Activated CD8-positive, alpha-beta T cell treated with anti-CD3 and anti-CD28 coated beads, Interleukin-2, amount 10 ng/mL, durations not matched to agents 7 days and 5 days (primary cell): ENCODE measurements at regions of chr3 and their contacts with region 1.

Region 1: DNA sequence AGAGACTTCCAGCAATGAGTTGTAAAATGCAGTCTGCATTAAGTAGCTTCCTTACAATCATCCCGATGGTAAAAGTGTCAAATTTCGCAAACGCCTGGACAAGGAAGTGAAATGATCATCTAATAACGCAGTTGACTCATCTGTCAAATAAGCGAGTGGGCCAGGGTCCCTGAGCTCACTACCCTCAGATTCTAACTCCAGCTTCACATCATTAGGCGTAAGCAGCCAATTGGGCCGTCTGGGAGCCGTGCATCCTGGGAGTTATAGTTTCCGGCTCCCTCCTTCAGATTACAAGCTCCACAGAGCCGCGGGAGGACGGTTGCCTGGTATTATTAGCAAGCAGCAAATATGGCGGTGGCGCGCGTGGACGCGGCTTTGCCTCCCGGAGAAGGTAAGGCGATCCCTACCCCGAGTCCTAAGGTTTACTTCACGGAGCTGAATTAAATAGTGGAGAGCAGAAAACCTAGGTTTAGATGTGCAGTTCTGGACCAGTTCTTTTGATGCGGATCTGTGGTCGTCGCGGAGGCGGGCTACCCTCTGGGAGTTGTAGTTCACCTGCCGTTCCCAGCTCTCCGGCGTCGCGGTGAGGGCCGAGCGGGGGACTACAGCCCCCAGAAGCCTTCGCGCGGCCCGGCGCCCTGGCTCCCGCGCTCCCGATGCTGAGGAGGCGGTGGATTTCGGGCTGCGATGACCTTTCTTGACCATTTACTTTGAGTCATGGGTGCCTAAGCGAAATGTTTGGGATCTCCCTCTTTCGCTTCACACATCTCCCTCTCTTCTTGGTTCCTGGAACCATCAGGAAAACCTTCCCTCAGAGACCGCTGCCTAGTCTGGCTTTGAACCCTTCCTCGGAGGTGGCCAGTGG is at the start of gene CEP97:
- DNase-seq: peak; percentile 93
- ATAC-seq: peak; percentile 97
- H3K4me3 Mint-ChIP-seq: peak within 1 kb of the TSS; percentile 93
- H3K27ac Mint-ChIP-seq: peak within 1 kb of the TSS; percentile 95
- H3K4me1 Mint-ChIP-seq: peaks cover 48% of the 10 kb centered on the region
- H3K27me3 Mint-ChIP-seq: no peaks in the 10 kb centered on the region
- total RNA-seq, gene CEP97: 23.3 to 26.2 TPM

Region 2: DNA sequence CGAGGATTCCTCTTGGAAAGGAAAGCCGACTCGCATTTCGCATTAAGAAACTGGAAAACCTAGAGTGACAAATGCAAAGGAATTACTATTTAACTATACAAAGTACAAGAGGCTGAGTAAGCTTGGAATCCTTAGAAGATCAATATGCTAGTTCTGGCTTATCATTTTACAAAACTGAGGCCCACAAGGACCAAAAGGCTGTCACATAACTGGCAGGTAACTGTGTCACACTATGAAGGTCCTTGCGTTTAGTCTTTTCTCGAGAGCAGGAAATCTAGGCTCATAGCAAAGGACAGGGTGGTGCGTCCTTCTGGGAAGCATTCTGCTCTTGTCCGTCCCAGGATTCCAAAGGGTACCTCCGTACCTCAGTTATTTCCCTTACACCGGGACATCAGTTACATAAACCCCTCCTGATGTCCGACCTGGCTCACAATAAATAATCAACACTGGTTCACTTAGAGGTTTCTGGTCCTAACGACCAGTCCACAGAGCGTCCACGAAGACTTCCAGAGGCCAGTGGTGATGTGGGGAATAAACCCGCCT is 38.6 kb before region 1 on chr3:
- CTCF ChIA-PET with region 1: interaction called, 4 read pairs
- POLR2A ChIA-PET with region 1: interaction called, 10 read pairs
- DNase-seq: no peak
- ATAC-seq: peak; percentile 9
- H3K4me3 Mint-ChIP-seq: peak overlapping the region; percentile 97
- H3K27ac Mint-ChIP-seq: peak overlapping the region; percentile 97
- H3K4me1 Mint-ChIP-seq: peaks cover 38% of the 10 kb centered on the region
- H3K27me3 Mint-ChIP-seq: no peaks in the 10 kb centered on the region

Region 3: GRCh38 chr3:101703169-101703568 is 21.4 kb before region 1 on chr3:
- CTCF ChIA-PET with region 1: interaction called, 10 read pairs
- POLR2A ChIA-PET with region 1: interaction called, 3 read pairs
- DNase-seq: no peak
- ATAC-seq: no peak
- H3K4me3 Mint-ChIP-seq: no peak overlapping the region
- H3K27ac Mint-ChIP-seq: no peak overlapping the region
- H3K4me1 Mint-ChIP-seq: no peaks in the 10 kb centered on the region
- H3K27me3 Mint-ChIP-seq: no peaks in the 10 kb centered on the region

Region 4: DNA sequence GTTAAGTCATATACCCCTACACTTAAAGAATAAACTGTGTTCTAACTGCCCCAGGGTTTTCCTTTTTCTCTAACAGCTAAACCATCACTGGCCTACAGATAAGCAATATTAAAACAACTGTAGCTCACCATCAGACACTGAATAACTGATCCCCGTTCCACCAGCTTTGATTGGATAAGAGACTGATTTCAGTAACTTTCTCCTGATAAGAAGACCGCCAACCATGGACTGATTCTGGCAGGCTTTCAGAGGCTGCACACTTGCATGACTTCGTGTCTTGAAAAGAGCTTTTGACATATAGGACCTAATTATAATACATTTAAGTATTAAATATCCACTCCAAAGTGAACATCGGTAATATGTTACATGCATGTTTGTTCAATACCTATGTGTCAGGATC is 15.4 kb before region 1 on chr3:
- CTCF ChIA-PET with region 1: interaction called, 11 read pairs
- POLR2A ChIA-PET with region 1: interaction called, 3 read pairs
- DNase-seq: no peak
- ATAC-seq: no peak
- H3K4me3 Mint-ChIP-seq: no peak overlapping the region
- H3K27ac Mint-ChIP-seq: no peak overlapping the region
- H3K4me1 Mint-ChIP-seq: no peaks in the 10 kb centered on the region
- H3K27me3 Mint-ChIP-seq: no peaks in the 10 kb centered on the region

Region 5: GRCh38 chr3:101779047-101779821 is 54.7 kb after region 1 on chr3 and contains the start of gene NXPE3:
- CTCF ChIA-PET with region 1: interaction called, 4 read pairs
- POLR2A ChIA-PET with region 1: interaction called, 14 read pairs
- DNase-seq: peak; percentile 95
- ATAC-seq: peak; percentile 94
- H3K4me3 Mint-ChIP-seq: peak within 1 kb of the TSS; percentile 81
- H3K27ac Mint-ChIP-seq: peak within 1 kb of the TSS; percentile 97
- H3K4me1 Mint-ChIP-seq: peaks cover 48% of the 10 kb centered on the region
- H3K27me3 Mint-ChIP-seq: no peaks in the 10 kb centered on the region
- total RNA-seq, gene NXPE3: 25.7 to 29.5 TPM

Region 6: GRCh38 chr3:102018551-102018950 is 294.0 kb after region 1 on chr3:
- CTCF ChIA-PET with region 1: no interaction called
- POLR2A ChIA-PET with region 1: no interaction called
- DNase-seq: no peak
- ATAC-seq: no peak
- H3K4me3 Mint-ChIP-seq: no peak overlapping the region
- H3K27ac Mint-ChIP-seq: no peak overlapping the region
- H3K4me1 Mint-ChIP-seq: peaks cover 4% of the 10 kb centered on the region
- H3K27me3 Mint-ChIP-seq: no peaks in the 10 kb centered on the region